ENCODE measurements at regions of chr17 and their contacts with region 1.

Region 1: GRCh38 chr17:67689534-67690177 is 28.1 kb upstream of the NOL11 start:
- DNase-seq: peak in 2 of 4 donors; percentile 59 to 70
- ATAC-seq: peak; percentile 89
- H3K4me3 ChIP-seq: no peak overlapping the region
- H3K27ac ChIP-seq: no peak overlapping the region
- H3K4me1 ChIP-seq: peaks cover 0 to 7% of the 10 kb centered on the region in 2 donors
- H3K27me3 ChIP-seq: no peaks in the 10 kb centered on the region
- CTCF ChIP-seq: peak; percentile 73 to 80

Region 2: GRCh38 chr17:67376737-67377487 is 312.7 kb before region 1 on chr17 and contains the start of gene PITPNC1:
- intact Hi-C with region 1: loop called (anchors 5 to 10 kb)
- DNase-seq: peak; percentile 84 to 98 (median 91)
- ATAC-seq: peak; percentile 87
- H3K4me3 ChIP-seq: peak within 1 kb of the TSS; percentile 70 to 81
- H3K27ac ChIP-seq: peak within 1 kb of the TSS; percentile 92 to 93
- H3K4me1 ChIP-seq: peaks cover 9 to 36% of the 10 kb centered on the region in 2 donors
- H3K27me3 ChIP-seq: no peaks in the 10 kb centered on the region
- CTCF ChIP-seq: no peak
- polyA plus RNA-seq, gene PITPNC1: 9.7 to 12.2 (median 10.6) TPM